ENCODE measurements at regions of chr3 and their contacts with region 1.

Region 1: DNA sequence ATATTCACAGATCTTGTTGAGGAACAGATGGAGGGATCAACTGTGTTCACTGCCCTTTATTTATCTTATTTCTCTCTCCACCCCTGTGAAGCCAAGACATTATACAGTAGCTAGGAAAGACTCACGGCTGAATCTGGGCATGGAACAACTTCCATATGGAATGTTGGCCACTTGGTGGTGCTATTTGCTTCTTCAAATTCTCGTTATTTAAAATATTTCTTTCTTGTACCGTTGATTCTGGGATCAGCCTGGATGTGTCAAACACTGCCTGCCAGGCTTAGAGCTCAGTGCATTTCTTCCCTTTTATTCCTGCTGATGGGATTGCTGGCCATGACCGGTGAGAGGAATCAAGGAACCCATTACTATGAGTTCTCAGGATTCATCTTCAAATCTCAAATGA is 17.5 kb upstream of the GASK1A start:
- ATAC-seq: peak; percentile 71 to 94 (median 84)
- H3K4me3 ChIP-seq: no peak overlapping the region
- H3K27ac ChIP-seq: no peak overlapping the region
- H3K4me1 ChIP-seq: no peaks in the 10 kb centered on the region

Region 2: GRCh38 chr3:43087249-43087776 is 125.7 kb after region 1 on chr3:
- in situ Hi-C with region 1: loop called in 1 of 9 experiments (anchors 25 kb)
- ATAC-seq: peak in 1 of 8 experiments; percentile 45
- H3K4me3 ChIP-seq: no peak overlapping the region
- H3K27ac ChIP-seq: no peak overlapping the region
- H3K4me1 ChIP-seq: no peaks in the 10 kb centered on the region

Region 3: DNA sequence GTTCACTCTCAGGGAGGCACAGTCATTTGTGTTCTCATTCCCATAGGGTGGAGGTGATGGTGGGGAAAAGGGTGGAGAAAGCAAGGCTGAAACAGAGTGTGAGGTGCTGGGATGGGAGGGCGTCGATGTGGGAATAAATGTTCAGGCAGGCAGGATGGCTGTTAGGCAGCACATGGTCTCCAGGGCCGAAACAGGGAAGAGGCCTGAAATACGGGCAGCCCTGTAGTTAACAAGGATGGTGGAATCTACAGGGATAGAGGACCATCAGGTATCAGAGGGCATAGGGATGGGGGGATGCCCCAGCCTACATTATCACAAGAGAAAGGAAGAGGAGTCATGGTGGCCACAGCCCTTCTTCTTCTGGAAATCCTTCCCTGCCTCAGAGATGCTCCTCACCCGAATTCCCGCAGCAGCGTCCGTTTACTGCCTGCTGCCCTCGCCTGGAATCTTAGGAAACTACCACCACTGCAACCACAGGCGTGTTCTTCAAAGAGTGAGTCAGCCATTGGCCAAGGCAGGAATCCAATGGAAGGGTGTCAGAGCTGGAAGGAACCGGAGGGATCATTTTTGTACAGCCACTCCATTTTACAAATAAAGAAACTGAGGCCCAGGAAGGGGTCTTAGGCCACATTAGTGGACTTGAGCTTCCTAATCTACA is 194.0 kb after region 1 on chr3:
- in situ Hi-C with region 1: loop called in 2 of 9 experiments (anchors 10 to 25 kb)
- ATAC-seq: peak in 4 of 8 experiments; percentile 19 to 78 (median 64)
- H3K4me3 ChIP-seq: no peak overlapping the region
- H3K27ac ChIP-seq: peak overlapping the region in 1 of 2 donors; percentile 9
- H3K4me1 ChIP-seq: peaks cover 31 to 33% of the 10 kb centered on the region in 2 donors

Region 4: GRCh38 chr3:43503067-43503728 is 541.6 kb after region 1 on chr3:
- in situ Hi-C with region 1: loop called in 3 of 9 experiments (anchors 10 to 25 kb)
- ATAC-seq: peak in 6 of 8 experiments; percentile 25 to 78 (median 54)
- H3K4me3 ChIP-seq: no peak overlapping the region
- H3K27ac ChIP-seq: no peak overlapping the region
- H3K4me1 ChIP-seq: no peaks in the 10 kb centered on the region

Region 5: DNA sequence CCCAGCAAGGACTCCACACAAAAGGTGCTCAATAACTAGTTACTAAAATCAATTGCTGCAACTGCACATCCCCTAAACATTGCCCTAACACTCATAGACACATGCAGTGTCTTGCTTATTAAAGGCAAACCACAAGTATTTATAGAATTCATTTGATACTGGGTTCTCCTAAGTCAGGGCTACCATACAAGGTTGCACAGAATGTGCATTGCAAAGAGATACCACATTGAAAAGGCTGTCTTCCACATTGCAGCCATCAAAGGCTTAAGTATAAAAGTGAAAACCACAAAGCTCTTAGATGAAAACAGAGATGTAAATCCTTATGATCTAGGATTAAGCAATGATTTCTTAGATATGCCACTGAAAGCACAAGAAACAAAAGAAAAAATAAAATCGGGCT is 1246.5 kb after region 1 on chr3:
- in situ Hi-C with region 1: loop called in 1 of 9 experiments (anchors 25 kb)
- ATAC-seq: peak in 3 of 8 experiments; percentile 40 to 91 (median 89)
- H3K4me3 ChIP-seq: no peak overlapping the region
- H3K27ac ChIP-seq: no peak overlapping the region
- H3K4me1 ChIP-seq: no peaks in the 10 kb centered on the region